GM10248 (cell line): ENCODE measurements at regions of chr17 and their contacts with region 1.

Region 1: DNA sequence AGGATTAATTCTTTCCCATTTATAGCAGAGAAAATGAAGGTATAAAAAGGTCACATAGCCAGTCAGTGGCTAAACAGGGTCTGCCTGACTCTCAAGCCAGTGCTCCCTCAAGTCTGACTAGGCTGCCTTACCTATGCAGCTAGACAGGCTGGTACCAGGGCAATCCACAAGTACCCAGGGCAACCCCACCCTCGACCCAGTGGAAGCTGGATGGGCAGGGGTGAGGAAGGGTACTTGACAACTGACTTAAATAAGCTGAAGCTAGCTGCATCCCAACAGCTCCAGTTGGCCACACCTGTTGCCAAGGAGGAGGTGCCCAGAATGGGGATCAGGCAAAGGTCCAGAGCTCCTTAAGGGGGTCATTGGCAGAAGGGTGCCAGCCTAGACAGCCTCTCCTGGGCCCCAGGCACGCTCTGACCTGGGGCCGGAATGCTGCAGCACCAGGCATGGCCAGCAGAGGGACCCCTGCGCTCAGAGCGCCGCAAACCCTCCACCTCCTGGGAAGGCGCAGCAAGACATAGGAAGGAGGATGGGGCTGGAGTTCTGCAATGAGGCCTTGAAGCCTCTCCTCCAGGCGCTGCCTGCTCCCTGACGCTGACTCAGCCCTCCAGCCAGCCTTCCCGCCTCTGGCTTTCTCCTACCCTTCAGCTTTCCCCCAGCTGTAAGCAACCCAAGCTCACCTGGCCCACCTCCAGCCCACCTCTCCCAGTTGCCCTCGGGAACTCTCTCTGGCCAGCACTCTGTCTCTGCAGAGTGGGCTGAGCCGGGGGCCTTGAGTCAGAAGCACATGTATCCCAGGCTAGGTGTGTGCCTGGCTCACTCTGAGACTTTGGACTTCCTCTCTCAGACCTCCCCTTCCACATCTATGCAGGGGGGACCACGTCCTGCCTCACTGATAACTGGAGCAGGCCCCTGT is 28.8 kb downstream of the MPP2 start:
- DNase-seq: peak; percentile 87
- CTCF ChIP-seq: peak; percentile 99

Region 2: DNA sequence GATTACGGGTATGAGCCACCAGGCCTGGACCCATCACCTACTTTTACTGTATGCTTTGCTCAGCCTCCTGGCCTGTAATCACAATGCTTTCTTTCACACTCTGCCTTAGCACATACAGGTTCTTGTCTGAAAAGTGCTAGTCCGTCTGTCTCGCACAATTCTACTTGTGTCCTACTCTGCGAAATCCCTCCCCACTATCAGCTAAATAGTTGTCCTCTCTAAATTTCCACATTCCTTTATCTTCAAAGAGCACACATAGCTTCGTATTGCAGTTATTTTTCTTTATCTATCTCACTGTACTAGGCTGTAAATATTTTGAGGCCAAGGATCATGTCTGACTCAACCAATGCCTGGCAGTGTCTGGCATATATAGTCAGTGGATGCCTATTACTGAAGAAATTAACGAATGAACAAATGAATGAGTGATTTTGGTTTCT is 293.8 kb before region 1 on chr17:
- CTCF ChIA-PET with region 1: no interaction called
- POLR2A ChIA-PET with region 1: no interaction called
- DNase-seq: no peak
- CTCF ChIP-seq: no peak

Region 3: GRCh38 chr17:43734376-43734775 is 144.1 kb before region 1 on chr17:
- CTCF ChIA-PET with region 1: no interaction called
- POLR2A ChIA-PET with region 1: no interaction called
- DNase-seq: no peak
- CTCF ChIP-seq: no peak

Region 4: DNA sequence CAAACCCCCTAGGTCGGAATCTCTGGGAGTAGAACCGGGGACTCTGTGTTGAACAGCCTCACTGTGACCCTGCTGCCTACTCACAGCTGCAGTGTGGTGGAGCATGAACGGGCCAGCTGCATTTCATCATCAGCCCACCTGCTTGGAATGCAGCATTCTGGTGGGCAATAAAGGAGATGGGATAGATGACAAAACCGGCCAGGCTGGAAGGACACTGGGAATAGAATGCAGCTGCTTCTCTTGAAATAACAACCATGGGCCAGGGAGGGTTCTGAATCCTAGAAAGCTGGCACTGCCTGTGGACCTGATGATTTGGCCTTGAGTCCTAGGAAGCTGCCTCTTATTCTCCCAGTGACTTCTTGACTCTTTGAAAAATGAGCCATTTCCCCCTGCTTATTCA is 74.8 kb before region 1 on chr17:
- CTCF ChIA-PET with region 1: no interaction called
- POLR2A ChIA-PET with region 1: no interaction called
- DNase-seq: no peak
- CTCF ChIP-seq: no peak

Region 5: DNA sequence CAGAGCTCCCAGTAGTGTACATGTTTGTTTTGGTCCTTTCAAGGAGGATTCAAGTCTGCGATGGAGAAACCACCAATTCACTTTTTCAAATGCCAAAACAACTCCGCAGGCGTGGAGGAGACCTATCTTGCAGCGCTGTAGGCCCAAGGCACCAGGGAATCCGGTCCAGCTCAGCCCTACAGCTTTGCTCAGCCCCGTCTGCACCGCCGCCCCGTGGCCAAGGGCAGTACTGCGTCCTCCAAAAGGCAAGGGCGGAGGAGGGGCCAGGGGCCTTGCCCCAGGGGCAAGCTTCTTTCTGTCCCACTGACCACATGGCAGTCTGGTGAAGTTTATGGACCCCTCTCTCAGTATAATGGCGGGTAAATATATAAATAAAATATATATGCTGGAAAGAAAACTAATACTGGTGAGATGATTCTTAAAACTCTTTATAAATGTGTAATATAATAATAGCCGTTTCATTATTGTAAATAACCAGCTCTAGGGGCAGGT is 32.3 kb before region 1 on chr17:
- CTCF ChIA-PET with region 1: interaction called, 14 read pairs
- POLR2A ChIA-PET with region 1: no interaction called
- DNase-seq: peak; percentile 89
- CTCF ChIP-seq: peak; percentile 97

Region 6: DNA sequence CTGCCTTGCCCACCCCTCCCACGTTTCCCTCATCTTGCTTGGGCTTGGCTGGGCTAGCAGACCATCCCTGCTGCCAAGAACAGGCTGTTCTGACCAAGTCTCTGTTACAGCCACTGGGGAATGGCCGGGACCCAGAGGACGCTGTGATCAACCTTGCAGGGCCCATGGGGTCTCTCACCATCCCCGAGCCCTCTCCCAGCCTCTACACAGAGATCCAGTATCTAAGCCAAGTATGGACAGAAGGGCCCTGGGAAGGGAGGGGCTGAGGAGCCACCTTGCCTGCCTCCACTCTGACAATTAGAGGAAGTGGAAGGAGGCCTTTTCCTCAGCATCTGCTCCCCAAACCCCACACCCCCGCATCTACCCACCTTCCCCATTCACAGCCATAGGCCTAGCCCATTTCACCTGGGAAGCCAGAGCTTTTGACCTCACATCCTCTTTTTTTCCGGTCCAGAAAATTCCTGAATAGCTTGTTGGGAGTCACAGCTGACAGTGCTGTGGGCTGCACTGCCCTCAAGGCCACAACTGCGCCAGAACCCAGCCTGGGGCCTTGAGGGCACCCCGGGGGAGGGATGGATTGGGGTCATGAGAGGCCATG is 17.4 kb before region 1 on chr17:
- CTCF ChIA-PET with region 1: interaction called, 28 read pairs
- POLR2A ChIA-PET with region 1: no interaction called
- DNase-seq: no peak
- CTCF ChIP-seq: no peak

Region 7: DNA sequence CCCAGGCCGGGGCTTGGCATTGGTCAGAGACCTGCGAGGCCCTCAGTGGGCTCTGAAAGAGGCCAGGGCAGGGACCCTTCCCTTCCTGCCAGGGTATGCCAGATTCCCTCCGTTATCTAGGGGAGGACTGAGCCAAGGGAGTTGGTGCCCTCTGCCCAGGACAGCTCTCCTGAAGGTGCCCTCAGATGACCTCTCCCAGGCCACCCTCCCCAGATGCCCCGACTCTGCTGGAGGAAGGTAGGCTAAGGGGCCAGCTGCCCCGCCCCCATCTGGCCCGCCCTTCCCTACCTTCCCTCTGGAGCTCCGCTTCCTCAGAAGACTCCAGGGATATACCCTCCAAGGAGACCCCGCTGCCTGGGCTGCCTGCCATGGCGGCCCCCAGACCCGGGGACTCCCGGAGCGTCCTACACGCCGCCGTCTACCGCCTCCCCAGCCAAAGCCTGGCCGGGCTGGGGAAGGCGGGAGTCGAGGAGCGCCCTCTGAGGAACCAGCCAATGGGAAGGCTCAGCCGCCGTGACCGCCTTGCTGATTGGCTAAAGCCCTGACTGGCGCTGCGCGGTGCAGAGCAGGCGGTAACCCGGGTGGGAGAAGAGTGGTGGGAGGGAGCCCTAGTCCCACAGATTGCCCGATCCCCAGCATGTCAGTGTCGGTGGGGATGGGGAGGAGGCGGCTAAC is 21.8 kb after region 1 on chr17:
- CTCF ChIA-PET with region 1: interaction called, 41 read pairs
- POLR2A ChIA-PET with region 1: no interaction called
- DNase-seq: peak; percentile 88
- CTCF ChIP-seq: no peak

Region 8: GRCh38 chr17:43927060-43927864 is 48.7 kb after region 1 on chr17:
- CTCF ChIA-PET with region 1: interaction called, 13 read pairs
- POLR2A ChIA-PET with region 1: no interaction called
- DNase-seq: no peak
- CTCF ChIP-seq: no peak